Heart right ventricle (tissue), 16 donors: ENCODE measurements at regions of chr7 and their contacts with region 1.

Region 1: DNA sequence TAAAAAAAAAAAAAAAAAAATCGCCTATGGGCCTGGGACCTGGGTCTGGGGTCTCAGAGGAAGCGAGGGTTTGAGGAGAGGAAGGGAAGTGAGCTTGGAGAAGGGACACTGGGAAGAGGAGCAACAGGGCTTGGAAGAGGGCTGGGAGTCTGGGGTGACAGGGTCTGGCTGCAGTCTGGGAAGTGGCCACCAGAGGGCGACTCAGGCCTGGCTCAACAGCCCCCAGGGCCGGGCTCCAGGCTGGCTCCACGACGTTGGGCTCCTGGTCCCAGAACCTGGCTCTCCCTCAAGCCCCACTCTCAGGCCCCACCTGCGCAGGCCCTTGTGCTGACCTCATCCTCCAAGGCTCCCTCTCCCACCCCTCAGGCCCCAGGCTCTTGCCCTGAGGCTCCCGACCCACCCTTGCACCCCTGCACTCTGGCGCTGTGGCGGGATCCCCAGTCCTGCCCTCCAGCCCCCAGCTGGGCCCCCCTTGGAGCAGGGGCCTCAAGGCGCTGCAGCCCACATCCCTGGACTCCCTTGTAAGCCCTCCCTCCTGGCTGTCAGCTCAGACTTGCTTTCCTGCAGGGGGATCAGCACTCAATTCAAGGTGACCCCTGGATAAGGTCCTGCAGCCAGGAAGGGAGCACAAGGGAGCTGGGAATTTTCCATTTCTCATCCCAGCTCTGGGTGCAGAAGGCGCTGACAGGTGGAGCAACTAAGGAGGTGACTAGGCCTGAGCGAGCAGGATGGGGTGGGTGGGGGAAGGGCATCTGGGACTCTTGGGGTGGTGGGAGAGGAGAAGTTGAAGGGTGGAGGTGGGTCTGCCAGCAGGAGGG is 5.4 kb upstream of the SPACDR start:
- DNase-seq: peak; percentile 86 to 92
- ATAC-seq: peak; percentile 69 to 81 (median 75)
- H3K4me3 ChIP-seq: no peak overlapping the region
- H3K27ac ChIP-seq: peak overlapping the region in 8 of 10 donors; percentile 29 to 76 (median 66)
- H3K4me1 ChIP-seq: peaks cover 17 to 90% (median 55%) of the 10 kb centered on the region in 9 donors
- H3K27me3 ChIP-seq: no peaks in the 10 kb centered on the region
- CTCF ChIP-seq: peak; percentile 90 to 95 (median 94)

Region 2: DNA sequence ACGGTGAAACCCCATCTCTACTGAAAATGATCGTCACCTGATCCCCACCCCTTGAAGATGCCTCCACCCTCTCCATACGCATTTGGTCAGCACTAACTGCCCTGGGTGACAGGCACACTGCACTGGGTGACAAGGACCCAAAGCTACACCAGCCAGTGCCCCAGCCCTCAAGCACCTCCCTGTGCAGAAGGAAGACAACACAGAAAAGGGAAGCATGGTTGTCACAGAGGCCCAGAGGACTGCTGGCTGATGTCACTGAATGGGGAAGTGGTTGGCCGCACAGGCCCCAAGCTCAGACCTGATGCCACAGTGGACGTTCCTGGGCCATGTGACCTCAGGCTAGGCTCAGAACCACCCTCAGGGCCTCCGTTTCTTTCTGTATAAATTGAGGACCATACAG is 100.3 kb before region 1 on chr7:
- intact Hi-C with region 1: no loop called
- DNase-seq: peak; percentile 37 to 58
- ATAC-seq: peak; percentile 36 to 75 (median 62)
- H3K4me3 ChIP-seq: no peak overlapping the region
- H3K27ac ChIP-seq: peak overlapping the region in 6 of 10 donors; percentile 30 to 95 (median 60)
- H3K4me1 ChIP-seq: peaks cover 0 to 86% (median 0%) of the 10 kb centered on the region in 9 donors
- H3K27me3 ChIP-seq: no peaks in the 10 kb centered on the region
- CTCF ChIP-seq: no peak

Region 3: DNA sequence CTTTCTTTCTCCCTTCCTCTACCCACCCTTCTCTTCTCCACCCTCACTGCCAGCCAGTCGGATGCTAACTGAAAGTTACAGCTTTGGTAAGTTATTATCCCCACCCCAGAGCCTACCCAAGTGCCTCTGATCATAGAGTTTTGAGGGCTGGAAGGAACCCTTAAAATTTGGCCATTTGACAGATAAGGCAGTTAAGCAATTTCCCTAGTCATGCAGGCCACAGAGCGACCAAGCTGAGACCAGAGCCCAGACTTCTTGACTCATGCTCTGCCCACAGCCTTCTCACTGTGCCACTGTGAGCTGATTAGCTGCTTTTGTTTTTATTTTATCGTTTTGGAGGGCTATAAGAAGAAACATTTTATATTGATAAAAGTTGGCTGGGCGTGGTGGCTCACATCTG is 87.1 kb after region 1 on chr7:
- intact Hi-C with region 1: loop called (anchors 1 to 5 kb)
- DNase-seq: no peak
- ATAC-seq: no peak
- H3K4me3 ChIP-seq: no peak overlapping the region
- H3K27ac ChIP-seq: peak overlapping the region in 1 of 10 donors; percentile 26
- H3K4me1 ChIP-seq: peaks cover 0 to 20% (median 6%) of the 10 kb centered on the region in 9 donors
- H3K27me3 ChIP-seq: no peaks in the 10 kb centered on the region
- CTCF ChIP-seq: no peak

Region 4: GRCh38 chr7:100680167-100680575 is 210.7 kb after region 1 on chr7:
- intact Hi-C with region 1: loop called in 4 of 10 experiments (anchors 10 kb)
- DNase-seq: peak in 1 of 2 donors; percentile 48
- ATAC-seq: peak in 6 of 8 donors; percentile 7 to 41 (median 21)
- H3K4me3 ChIP-seq: no peak overlapping the region
- H3K27ac ChIP-seq: peak overlapping the region in 5 of 10 donors; percentile 4 to 55 (median 21)
- H3K4me1 ChIP-seq: peaks cover 0 to 49% (median 23%) of the 10 kb centered on the region in 9 donors
- H3K27me3 ChIP-seq: no peaks in the 10 kb centered on the region
- CTCF ChIP-seq: no peak

Region 5: GRCh38 chr7:100705753-100706671 is 236.6 kb after region 1 on chr7 and contains the start of gene POP7:
- intact Hi-C with region 1: loop called in 1 of 10 experiments (anchors 10 kb)
- DNase-seq: peak; percentile 99
- ATAC-seq: peak; percentile 97 to 99 (median 98)
- H3K4me3 ChIP-seq: peak within 1 kb of the TSS; percentile 63 to 95 (median 77)
- H3K27ac ChIP-seq: peak within 1 kb of the TSS; percentile 84 to 99 (median 94)
- H3K4me1 ChIP-seq: peaks cover 4 to 24% (median 17%) of the 10 kb centered on the region in 9 donors
- H3K27me3 ChIP-seq: no peaks in the 10 kb centered on the region
- CTCF ChIP-seq: no peak
- total RNA-seq, gene POP7: 23.2 to 34.9 (median 25.3) TPM

Region 6: DNA sequence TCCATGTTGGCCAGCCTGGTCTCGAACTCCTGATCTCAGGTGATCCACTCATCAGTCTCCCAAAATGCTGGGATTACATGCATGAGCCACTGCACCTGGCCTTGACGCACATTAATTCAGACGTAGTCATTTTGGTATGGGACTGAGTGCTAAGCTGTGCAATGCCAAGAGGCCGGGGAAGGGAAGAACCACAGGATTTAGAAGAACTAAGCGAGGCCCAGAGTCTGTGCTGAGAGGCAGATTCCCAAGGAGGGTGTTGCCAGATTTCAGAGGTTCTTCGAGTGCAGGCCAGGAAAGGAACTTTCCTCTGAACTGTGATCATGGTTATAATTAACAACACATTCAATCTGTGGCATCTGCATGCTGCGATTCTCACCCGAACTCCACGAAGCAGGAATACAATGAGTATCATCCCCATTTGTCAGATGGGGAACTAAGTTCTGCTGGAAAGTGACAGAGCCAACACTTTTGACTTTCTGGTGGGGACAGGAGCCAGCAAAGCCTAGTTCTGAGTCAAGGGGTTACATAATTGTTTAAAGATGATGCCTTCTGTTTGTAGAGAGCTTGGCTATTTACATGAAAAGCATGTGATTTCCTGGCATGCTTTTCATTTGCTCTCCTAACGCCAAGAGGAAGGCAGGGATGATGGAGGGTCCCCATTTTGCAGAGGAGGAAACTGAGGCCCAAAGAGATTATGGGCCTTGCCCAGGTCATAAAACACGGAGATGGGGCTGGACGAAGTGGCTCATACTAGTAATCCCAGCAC is 257.7 kb after region 1 on chr7:
- intact Hi-C with region 1: loop called in 4 of 10 experiments (anchors 5 to 10 kb)
- DNase-seq: no peak
- ATAC-seq: no peak
- H3K4me3 ChIP-seq: no peak overlapping the region
- H3K27ac ChIP-seq: no peak overlapping the region
- H3K4me1 ChIP-seq: peaks cover 0 to 6% (median 0%) of the 10 kb centered on the region in 9 donors
- H3K27me3 ChIP-seq: peaks cover 0 to 67% (median 28%) of the 10 kb centered on the region in 7 donors
- CTCF ChIP-seq: no peak